Dorsolateral prefrontal cortex (tissue), 120 donors: ENCODE measurements at regions of chr6 and their contacts with region 1.

Region 1: GRCh38 chr6:90574610-90575009 is 12.3 kb downstream of the MAP3K7 start:
- DNase-seq: no peak
- H3K4me3 ChIP-seq: no peak overlapping the region
- H3K27ac ChIP-seq: no peak overlapping the region
- H3K27me3 ChIP-seq: no peaks in the 10 kb centered on the region
- CTCF ChIP-seq: peak in 50 of 56 donors; percentile 19 to 68 (median 44)

Region 2: DNA sequence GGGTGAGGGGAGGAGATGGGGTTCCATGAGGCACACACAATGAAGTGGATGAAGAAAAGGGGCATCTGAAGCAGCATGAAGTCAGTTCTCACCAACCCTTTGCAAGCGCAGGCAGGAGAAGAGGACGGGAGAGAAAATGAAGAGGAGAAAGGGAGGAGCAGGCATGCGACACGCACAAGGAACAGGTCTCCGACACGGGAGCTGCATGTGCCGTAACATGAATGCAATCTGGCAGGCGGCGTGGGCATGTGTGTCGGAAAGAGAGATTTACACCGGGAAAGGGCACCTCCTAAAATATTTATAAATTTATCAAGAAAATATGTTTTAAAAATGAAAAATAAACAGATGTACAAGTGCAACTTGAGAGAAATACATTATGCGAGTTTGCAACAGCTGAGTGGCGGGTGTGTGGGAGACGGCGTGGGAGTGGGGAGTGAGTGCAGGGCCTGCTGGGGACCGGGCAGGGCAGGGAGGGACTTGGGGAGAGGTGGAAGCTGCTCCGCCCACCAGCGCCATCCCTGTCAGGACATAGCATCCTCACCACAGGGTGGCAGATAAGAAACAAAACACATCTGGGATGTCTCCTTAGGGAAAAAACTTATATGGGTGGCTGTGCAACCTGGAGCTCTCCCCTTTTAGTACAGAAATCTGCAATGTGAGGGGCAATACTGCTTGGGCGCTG is 639.8 kb before region 1 on chr6:
- intact Hi-C with region 1: loop called (anchors 5 to 10 kb)
- DNase-seq: peak in 2 of 10 donors; percentile 30 to 45
- H3K4me3 ChIP-seq: peak overlapping the region in 26 of 59 donors; percentile 9 to 46 (median 26)
- H3K27ac ChIP-seq: peak overlapping the region in 11 of 59 donors; percentile 9 to 37 (median 24)
- H3K27me3 ChIP-seq: no peaks in the 10 kb centered on the region
- CTCF ChIP-seq: peak in 2 of 56 donors; percentile 6

Region 3: DNA sequence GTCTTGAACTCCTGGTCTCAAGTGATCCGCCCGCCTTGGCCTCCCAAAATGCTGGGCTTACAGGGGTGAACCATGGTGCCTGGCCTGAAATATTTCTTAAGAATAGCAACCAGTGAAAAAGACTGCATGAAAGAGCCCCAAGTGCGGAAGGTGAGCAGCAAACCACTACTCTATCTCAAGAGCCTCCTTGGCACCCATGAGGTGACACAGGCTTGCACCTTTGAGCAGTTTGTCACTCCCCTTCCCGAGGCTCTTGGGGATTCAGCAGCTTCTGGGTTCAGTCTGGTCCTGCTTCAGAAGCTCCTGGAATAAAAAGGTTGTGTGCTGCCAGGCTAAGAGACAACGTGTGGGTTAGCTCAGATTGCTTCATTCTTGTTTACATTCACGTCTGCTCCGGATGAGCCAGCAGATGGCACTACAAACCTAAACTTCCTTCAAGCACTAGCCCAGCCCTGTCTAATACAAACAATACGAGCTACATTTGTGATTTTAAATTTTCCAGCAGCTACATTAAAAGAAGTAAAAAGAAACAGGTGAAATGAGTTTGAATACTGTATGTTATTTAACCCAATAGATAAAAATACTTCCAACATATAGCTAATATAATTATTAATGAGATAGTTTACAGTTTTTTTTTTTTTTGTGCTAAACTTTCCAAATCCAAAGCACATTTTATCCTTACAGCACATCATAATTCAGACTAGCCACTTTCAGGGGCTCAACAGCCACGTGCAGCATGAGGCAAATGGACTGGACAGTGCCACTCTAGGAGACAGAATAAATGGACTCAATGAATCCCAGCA is 634.2 kb before region 1 on chr6:
- intact Hi-C with region 1: loop called (anchors 5 to 10 kb)
- DNase-seq: peak; percentile 44 to 92 (median 80)
- H3K4me3 ChIP-seq: peak overlapping the region in 27 of 59 donors; percentile 2 to 47 (median 30)
- H3K27ac ChIP-seq: peak overlapping the region in 58 of 59 donors; percentile 22 to 92 (median 84)
- H3K27me3 ChIP-seq: no peaks in the 10 kb centered on the region
- CTCF ChIP-seq: peak; percentile 23 to 92 (median 81)

Region 4: DNA sequence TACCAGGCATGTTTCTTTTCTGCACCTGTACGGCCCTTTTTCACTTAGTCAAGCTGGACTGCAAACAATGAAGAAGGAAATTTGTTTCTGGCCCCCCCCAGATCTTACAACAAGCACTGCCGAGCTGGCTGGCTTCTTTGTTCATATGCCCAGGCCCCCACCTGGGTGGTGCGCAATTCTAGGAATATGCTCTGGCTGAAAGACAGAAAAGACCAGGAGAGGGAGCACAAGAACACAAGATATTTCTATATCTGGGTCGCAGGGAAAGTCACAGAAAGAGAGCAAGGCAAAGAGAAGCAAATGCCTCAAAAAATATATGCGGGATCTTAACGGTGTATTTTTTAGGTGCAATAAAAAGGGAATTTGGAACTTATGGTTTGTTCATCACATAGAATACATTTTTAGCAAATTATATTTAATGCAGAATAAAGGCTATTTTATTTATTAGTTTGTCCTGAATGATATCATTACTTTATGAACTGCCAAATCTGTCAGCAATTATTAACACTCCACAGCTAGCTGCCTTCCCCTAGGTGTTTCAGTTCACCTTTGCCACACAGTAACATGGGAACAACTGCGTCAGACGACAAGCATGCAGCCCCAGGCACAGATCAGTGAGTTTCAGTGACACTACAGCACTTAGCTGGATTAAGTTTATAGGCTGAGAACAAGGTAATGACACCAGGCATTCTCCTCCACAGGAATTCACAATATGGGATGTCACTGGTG is 603.8 kb before region 1 on chr6:
- intact Hi-C with region 1: loop called in 1 of 2 experiments (anchors 5 kb)
- DNase-seq: peak in 7 of 10 donors; percentile 53 to 81 (median 57)
- H3K4me3 ChIP-seq: peak overlapping the region in 3 of 59 donors; percentile 1 to 20 (median 2)
- H3K27ac ChIP-seq: peak overlapping the region in 12 of 59 donors; percentile 10 to 65 (median 19)
- H3K27me3 ChIP-seq: no peaks in the 10 kb centered on the region
- CTCF ChIP-seq: peak; percentile 21 to 83 (median 70)

Region 5: DNA sequence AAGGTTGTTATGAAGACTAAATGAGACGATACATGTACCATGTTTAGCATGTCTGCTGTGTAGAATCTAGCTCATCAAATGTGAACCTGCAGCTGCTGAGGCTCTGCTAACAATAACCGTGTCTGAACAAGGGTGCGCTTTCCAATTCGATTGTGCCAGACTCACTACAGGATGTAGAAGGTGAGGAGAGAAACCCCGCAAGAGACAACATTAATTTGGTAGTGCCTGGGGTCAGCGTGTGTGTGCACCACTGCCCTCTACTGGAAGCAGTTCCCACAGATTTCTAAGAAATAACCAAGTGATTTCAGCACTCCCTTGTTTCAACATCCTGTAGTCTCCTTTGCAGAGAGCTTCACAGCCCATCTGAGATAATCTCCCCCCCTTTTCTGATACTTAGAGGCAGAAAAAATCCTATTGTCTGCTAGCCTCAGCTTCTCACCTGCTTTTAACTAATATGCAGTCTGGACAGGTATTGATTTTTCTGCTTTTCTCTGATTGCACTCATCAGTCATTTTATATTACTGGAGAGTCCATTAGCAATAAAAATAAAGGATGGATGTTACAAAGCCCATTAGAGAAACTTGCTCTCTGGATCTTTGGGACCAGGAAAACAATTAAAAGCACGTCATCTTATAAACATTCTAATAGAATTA is 181.3 kb before region 1 on chr6:
- intact Hi-C with region 1: loop called in 1 of 2 experiments (anchors 5 kb)
- DNase-seq: peak in 6 of 10 donors; percentile 32 to 62 (median 54)
- H3K4me3 ChIP-seq: peak overlapping the region in 1 of 59 donors; percentile 20
- H3K27ac ChIP-seq: no peak overlapping the region
- H3K27me3 ChIP-seq: no peaks in the 10 kb centered on the region
- CTCF ChIP-seq: peak; percentile 62 to 88 (median 79)

Region 6: DNA sequence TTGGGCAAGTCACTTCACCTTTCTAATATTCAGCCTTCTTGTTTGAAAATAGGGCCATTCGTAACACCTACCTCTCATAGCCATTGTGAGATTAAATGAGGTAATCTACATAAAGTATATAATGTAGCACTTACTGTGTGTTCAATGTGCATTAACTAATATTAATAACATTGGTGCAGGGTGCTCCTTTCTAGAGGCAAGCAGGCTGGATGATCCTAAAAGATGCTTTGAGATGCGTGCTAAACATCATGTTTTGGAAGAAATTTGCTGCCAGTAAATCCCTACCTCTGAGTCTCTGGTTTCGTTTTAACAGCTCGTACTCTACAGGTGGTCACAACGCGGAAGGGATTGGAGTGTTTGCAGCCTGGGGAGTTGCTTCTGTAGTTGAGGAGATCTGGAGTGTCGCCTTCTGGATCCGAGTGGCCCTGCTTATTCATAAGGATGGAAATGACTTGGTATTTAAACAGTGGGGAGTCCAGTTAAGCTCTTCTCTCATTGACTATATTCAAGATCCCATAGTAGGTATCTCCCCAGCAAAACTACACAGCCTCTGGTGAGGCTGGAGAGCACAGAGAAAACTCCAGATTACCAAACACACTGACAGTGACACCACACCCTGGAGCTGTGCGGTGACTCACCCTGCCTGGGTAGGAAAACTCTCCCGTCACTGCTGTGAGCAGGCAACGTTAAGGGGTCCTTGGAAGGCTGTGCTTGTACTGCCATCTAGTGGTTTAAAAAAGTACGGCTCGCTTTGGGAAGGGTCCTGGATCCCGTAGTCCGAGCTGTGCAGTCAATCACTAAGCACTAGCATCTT is 95.6 kb before region 1 on chr6:
- intact Hi-C with region 1: loop called in 1 of 2 experiments (anchors 5 kb)
- DNase-seq: peak; percentile 59 to 94 (median 86)
- H3K4me3 ChIP-seq: peak overlapping the region in 34 of 59 donors; percentile 2 to 46 (median 23)
- H3K27ac ChIP-seq: peak overlapping the region in 35 of 59 donors; percentile 2 to 79 (median 48)
- H3K27me3 ChIP-seq: no peaks in the 10 kb centered on the region
- CTCF ChIP-seq: peak; percentile 78 to 99 (median 95)

Region 7: DNA sequence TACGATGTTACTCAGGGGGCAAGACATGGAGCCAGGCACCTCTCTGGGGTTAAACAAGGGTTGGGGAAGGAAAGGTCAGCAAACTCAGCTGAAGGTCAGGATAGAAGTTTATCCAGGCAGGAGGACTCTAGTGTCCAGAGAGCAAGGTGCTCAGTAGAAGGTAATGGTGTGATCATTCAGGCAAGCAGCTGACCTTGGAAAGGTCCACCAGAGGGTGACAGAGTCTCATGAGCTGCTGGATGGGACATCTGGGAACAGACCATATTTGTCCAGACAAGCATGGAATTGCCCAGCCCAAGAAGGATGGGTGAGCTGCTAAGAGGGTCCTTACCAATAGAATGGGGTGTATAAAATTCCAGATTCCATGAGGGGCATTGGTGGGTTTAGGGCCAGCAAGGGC is 77.2 kb before region 1 on chr6:
- intact Hi-C with region 1: loop called in 1 of 2 experiments (anchors 5 kb)
- DNase-seq: no peak
- H3K4me3 ChIP-seq: no peak overlapping the region
- H3K27ac ChIP-seq: peak overlapping the region in 1 of 59 donors; percentile 37
- H3K27me3 ChIP-seq: no peaks in the 10 kb centered on the region
- CTCF ChIP-seq: peak in 19 of 56 donors; percentile 6 to 57 (median 23)